ENCODE measurements at regions of chr14 and their contacts with region 1.

Region 1: GRCh38 chr14:32186248-32186647 is 15.6 kb upstream of the RNU6-7 start:
- DNase-seq: no peak
- ATAC-seq: no peak
- H3K4me3 Mint-ChIP-seq: peak overlapping the region; percentile 60
- H3K27ac Mint-ChIP-seq: peak overlapping the region; percentile 80
- H3K4me1 Mint-ChIP-seq: peaks cover 21% of the 10 kb centered on the region
- H3K27me3 Mint-ChIP-seq: peaks cover 2% of the 10 kb centered on the region
- CTCF ChIP-seq: no peak

Region 2: DNA sequence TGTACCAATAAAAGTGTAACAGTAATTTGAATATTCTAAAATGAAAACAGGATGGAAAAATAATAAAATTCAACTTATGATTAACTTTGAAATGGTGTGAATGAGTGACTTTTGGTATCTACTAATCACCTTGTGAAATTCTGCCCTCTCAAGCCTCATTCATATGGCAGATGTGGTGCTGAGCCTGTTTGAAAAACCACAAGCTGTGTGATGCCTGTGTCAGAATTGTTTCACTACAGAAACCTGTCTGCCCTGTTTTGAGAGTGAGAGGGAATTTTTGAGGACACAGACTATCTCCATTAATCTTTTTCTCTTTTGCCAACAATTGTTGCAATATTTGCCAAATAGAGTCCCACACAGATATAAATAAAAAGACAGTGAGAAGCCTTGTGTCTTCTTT is 11.7 kb after region 1 on chr14:
- CTCF ChIA-PET with region 1: interaction called, 4 read pairs
- POLR2A ChIA-PET with region 1: no interaction called
- intact Hi-C with region 1: loop called (anchors 1 kb)
- DNase-seq: no peak
- ATAC-seq: no peak
- H3K4me3 Mint-ChIP-seq: no peak overlapping the region
- H3K27ac Mint-ChIP-seq: no peak overlapping the region
- H3K4me1 Mint-ChIP-seq: peaks cover 30% of the 10 kb centered on the region
- H3K27me3 Mint-ChIP-seq: no peaks in the 10 kb centered on the region
- CTCF ChIP-seq: no peak

Region 3: DNA sequence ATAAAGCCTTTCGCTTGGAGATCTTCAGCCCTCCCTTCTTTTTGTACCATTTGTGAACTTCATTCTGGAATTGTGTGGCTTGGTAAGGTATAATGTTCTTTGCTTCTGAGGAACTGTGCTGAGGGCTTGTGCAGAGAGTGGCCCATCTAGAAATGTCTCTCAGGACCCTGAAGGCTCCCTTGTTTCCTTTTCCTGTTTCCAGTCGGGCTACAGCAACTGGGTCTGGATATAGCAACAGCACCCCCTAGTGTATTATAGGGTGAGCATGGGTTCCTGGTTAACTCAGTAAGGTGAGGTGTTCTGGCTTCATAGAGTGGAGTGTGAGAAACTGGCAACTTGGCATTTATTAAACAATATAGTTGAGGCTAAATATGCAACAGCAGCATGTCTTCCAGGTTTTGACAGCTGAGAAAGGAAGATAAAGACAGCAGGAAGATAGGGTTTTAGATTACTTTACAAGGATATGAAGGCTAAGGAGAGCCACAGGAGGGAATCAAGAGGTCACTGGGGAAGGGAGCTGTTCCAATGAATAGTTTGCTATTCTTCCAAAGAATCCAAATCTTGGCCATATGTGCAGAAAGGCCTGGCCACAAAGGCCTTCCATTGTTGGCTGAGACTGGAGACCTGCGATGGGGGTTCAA is 65.9 kb after region 1 on chr14:
- CTCF ChIA-PET with region 1: no interaction called
- POLR2A ChIA-PET with region 1: no interaction called
- intact Hi-C with region 1: no loop called
- DNase-seq: no peak
- ATAC-seq: peak; percentile 88
- H3K4me3 Mint-ChIP-seq: no peak overlapping the region
- H3K27ac Mint-ChIP-seq: no peak overlapping the region
- H3K4me1 Mint-ChIP-seq: no peaks in the 10 kb centered on the region
- H3K27me3 Mint-ChIP-seq: no peaks in the 10 kb centered on the region
- CTCF ChIP-seq: peak; percentile 46